Gastrocnemius medialis (tissue), 4 donors: ENCODE measurements at regions of chr5 and their contacts with region 1.

Region 1: DNA sequence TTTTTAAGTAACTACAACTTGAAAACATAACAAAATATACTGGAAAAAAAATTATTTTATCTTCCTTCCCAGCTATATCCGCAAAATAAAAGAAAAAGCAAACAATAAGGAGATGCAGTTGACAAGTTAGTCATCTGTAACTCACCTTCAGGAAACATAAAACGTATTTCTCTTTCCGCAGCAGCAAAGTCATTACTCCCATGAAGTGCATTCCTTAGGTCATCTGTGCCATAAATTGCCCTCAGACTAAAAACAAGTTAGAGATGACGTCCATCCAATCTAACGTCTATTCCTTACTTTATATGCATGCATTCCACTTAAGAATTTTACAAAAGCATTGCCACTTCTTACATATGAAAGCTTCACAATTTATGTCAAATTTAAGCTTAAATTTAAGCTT is 10.9 kb downstream of the NME5 start:
- DNase-seq: no peak
- ATAC-seq: no peak
- H3K4me3 ChIP-seq: no peak overlapping the region
- H3K27ac ChIP-seq: no peak overlapping the region
- H3K4me1 ChIP-seq: no peaks in the 10 kb centered on the region
- H3K27me3 ChIP-seq: no peaks in the 10 kb centered on the region
- CTCF ChIP-seq: no peak
- POLR2A ChIP-seq: no peak

Region 2: DNA sequence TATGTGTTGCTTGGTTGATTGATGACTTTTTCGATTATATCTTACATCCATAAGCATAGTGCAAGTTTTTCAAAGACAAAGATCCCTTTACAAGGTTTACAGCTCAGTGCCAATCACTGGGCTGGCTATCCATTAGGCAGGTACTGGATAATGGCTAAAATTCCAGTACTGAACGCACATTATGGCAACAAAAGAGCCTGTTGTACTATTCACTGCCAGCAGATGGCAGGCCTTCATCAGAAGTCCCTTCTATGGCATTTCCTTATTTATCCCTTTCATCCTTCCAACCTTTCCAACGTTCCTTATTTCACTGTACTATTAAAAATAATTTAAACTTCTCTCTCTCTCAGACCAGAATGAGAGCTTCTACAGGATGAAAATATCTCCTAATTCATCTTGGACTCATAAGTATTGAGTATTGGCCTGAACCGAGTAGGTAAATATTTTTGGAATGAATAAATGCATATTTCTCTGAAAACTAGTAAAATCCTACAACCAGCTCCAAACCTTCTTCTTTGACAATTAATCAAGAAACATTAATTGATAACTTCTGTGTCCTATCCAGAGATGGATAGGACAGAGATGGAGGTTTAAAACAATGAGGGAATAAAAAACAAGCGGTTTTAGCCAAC is 51.2 kb before region 1 on chr5:
- in situ Hi-C with region 1: no loop called
- intact Hi-C with region 1: loop called (anchors 1 kb)
- DNase-seq: peak; percentile 6 to 33
- ATAC-seq: peak; percentile 47 to 62
- H3K4me3 ChIP-seq: no peak overlapping the region
- H3K27ac ChIP-seq: no peak overlapping the region
- H3K4me1 ChIP-seq: no peaks in the 10 kb centered on the region
- H3K27me3 ChIP-seq: no peaks in the 10 kb centered on the region
- CTCF ChIP-seq: peak; percentile 36 to 78 (median 64)
- POLR2A ChIP-seq: no peak

Region 3: GRCh38 chr5:138093036-138093435 is 35.3 kb before region 1 on chr5:
- in situ Hi-C with region 1: loop called in 1 of 4 experiments (anchors 5 kb)
- intact Hi-C with region 1: no loop called
- DNase-seq: no peak
- ATAC-seq: no peak
- H3K4me3 ChIP-seq: no peak overlapping the region
- H3K27ac ChIP-seq: no peak overlapping the region
- H3K4me1 ChIP-seq: no peaks in the 10 kb centered on the region
- H3K27me3 ChIP-seq: no peaks in the 10 kb centered on the region
- CTCF ChIP-seq: no peak
- POLR2A ChIP-seq: no peak

Region 4: DNA sequence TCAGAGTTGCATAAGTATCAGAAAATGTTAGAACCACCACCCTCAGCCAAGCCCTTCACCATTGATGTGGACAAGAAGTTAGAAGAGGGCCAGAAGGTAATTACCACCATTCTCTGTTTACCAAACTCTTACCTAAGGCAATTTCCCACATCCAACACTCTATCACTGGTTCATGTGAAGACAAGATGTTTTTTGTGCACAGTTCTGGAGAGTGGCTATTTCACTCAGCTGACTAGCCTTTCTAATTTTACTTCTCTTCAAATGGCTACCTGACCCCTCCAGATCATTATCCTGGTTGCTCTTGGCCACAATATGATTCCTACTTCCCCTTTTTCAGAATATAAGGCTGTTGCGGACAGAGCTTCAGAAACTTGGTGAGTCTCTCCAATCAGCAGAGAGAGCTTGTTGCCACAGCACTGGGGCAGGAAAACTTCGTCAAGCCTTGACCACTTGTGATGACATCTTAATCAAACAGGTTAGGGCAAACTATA is 57.7 kb after region 1 on chr5:
- in situ Hi-C with region 1: no loop called
- intact Hi-C with region 1: no loop called
- DNase-seq: no peak
- ATAC-seq: no peak
- H3K4me3 ChIP-seq: no peak overlapping the region
- H3K27ac ChIP-seq: no peak overlapping the region
- H3K4me1 ChIP-seq: no peaks in the 10 kb centered on the region
- H3K27me3 ChIP-seq: no peaks in the 10 kb centered on the region
- CTCF ChIP-seq: no peak
- POLR2A ChIP-seq: no peak